ENCODE measurements at regions of chr13 and their contacts with region 1.

Region 1: DNA sequence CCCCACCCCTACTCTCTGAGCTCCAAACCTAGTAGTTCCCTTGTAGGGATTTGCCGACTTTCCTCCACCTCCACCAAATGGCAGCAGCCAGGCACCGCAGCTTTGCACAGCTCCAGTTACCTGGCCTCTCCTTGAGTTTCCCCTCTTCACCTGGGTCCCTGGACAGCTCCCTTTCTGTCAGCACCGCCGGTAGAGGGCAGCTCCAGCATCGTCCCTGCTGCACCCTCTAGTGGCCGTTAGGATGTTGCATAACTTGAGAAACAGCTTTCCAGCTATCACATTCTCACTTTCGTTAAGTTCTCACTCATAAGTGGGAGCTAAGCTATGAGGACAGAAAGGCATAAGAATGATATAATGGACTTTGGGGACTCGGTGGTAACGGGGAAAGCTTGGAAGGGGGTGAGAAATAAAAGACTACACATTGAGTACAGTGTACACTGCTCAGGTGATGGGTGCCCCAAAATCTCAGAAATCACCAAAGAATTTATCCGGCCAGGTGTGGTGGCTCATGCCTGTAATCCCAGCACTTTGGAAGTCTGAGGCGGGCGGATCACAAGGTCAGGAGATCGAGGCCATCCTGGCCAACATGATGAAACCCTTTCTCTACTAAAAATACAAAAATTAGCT is 60.4 kb upstream of the OLFM4 start:
- H3K4me3 Mint-ChIP-seq: no peak overlapping the region
- H3K27ac Mint-ChIP-seq: no peak overlapping the region
- H3K4me1 Mint-ChIP-seq: no peaks in the 10 kb centered on the region
- H3K27me3 Mint-ChIP-seq: peaks cover 4% of the 10 kb centered on the region

Region 2: DNA sequence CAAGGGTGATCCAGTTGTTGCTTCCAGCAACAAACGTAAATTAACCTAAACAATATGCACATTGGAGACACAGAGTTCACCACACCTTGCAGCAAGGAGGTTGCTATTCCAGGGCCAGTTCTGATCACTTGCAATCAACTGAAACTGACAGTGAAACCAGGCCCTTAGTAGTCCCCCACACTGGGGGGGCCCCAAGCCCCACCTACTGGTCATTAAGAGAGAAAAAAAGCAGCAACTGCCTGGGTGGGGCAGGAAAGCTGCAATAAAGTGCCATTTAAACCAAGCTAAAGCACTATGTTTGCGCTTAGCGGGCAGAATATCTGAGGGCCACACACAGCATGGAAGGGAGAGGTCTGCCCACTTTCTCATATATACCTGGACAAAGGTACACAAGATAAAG is 1008.4 kb before region 1 on chr13:
- intact Hi-C with region 1: no loop called
- H3K4me3 Mint-ChIP-seq: no peak overlapping the region
- H3K27ac Mint-ChIP-seq: no peak overlapping the region
- H3K4me1 Mint-ChIP-seq: peaks cover 16% of the 10 kb centered on the region
- H3K27me3 Mint-ChIP-seq: no peaks in the 10 kb centered on the region

Region 3: GRCh38 chr13:52599848-52600603 is 368.2 kb before region 1 on chr13:
- intact Hi-C with region 1: loop called (anchors 5 kb)
- H3K4me3 Mint-ChIP-seq: peak overlapping the region; percentile 75
- H3K27ac Mint-ChIP-seq: no peak overlapping the region
- H3K4me1 Mint-ChIP-seq: no peaks in the 10 kb centered on the region
- H3K27me3 Mint-ChIP-seq: peaks cover 26% of the 10 kb centered on the region

Region 4: DNA sequence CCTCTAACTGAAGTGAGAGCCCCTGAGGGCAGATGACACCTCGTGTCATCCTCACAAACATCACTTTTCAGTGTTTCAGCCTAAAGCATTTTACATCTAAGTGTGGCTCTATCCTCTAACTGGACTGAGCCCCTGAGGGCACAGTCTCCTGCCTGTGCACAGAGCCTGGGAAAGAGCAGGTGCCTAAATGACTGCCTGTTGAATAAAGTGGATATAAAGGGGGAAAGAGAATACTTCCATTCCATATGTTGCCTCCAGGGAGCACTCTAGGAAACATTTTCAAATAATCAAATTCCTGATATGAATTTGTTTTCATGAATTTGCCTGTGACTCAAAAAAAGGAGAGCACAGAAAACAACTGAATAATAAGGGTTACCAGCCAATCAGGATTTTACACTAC is 260.8 kb before region 1 on chr13:
- intact Hi-C with region 1: no loop called
- H3K4me3 Mint-ChIP-seq: no peak overlapping the region
- H3K27ac Mint-ChIP-seq: no peak overlapping the region
- H3K4me1 Mint-ChIP-seq: peaks cover 5% of the 10 kb centered on the region
- H3K27me3 Mint-ChIP-seq: no peaks in the 10 kb centered on the region

Region 5: GRCh38 chr13:52862358-52863206 is 105.6 kb before region 1 on chr13:
- intact Hi-C with region 1: loop called (anchors 1 kb)
- H3K4me3 Mint-ChIP-seq: no peak overlapping the region
- H3K27ac Mint-ChIP-seq: no peak overlapping the region
- H3K4me1 Mint-ChIP-seq: no peaks in the 10 kb centered on the region
- H3K27me3 Mint-ChIP-seq: peaks cover 10% of the 10 kb centered on the region

Region 6: GRCh38 chr13:52896827-52897659 is 71.1 kb before region 1 on chr13:
- intact Hi-C with region 1: loop called (anchors 1 kb)
- H3K4me3 Mint-ChIP-seq: no peak overlapping the region
- H3K27ac Mint-ChIP-seq: no peak overlapping the region
- H3K4me1 Mint-ChIP-seq: no peaks in the 10 kb centered on the region
- H3K27me3 Mint-ChIP-seq: peaks cover 13% of the 10 kb centered on the region

Measured in dendritic cell treated with granulocyte-macrophage colony-stimulating factor and Interleukin-4, amounts not matched to agents 40 ng/mL and 50 ng/mL, for 4 days (primary cell).